ENCODE measurements at regions of chr14 and their contacts with region 1.

Region 1: GRCh38 chr14:67704484-67705089 is 2.9 kb downstream of the RDH12 start:
- DNase-seq: peak; percentile 72
- ATAC-seq: peak; percentile 87
- H3K4me3 ChIP-seq: no peak overlapping the region
- H3K27ac ChIP-seq: no peak overlapping the region
- H3K4me1 ChIP-seq: peaks cover 16 to 32% of the 10 kb centered on the region in 2 experiments
- H3K27me3 ChIP-seq: no peaks in the 10 kb centered on the region
- CTCF ChIP-seq: peak; percentile 71 to 84 (median 83)
- POLR2A ChIP-seq: no peak
- RAD21 ChIP-seq: peak; percentile 90

Region 2: GRCh38 chr14:66624299-66624937 is 1080.2 kb before region 1 on chr14:
- CTCF ChIA-PET with region 1: interaction called, 7 read pairs
- POLR2A ChIA-PET with region 1: no interaction called
- RAD21 ChIA-PET with region 1: no interaction called
- intact Hi-C with region 1: loop called (anchors 5 kb)
- DNase-seq: peak; percentile 48
- ATAC-seq: peak; percentile 98
- H3K4me3 ChIP-seq: no peak overlapping the region
- H3K27ac ChIP-seq: no peak overlapping the region
- H3K4me1 ChIP-seq: no peaks in the 10 kb centered on the region
- H3K27me3 ChIP-seq: no peaks in the 10 kb centered on the region
- CTCF ChIP-seq: peak; percentile 65 to 74 (median 67)
- POLR2A ChIP-seq: no peak
- RAD21 ChIP-seq: peak; percentile 80

Region 3: GRCh38 chr14:67426983-67427606 is 277.5 kb before region 1 on chr14:
- CTCF ChIA-PET with region 1: interaction called, 70 read pairs
- POLR2A ChIA-PET with region 1: interaction called, 3 read pairs
- RAD21 ChIA-PET with region 1: interaction called, 7 to 14 read pairs
- intact Hi-C with region 1: loop called (anchors 2 kb)
- DNase-seq: peak; percentile 71
- ATAC-seq: peak; percentile 91
- H3K4me3 ChIP-seq: no peak overlapping the region
- H3K27ac ChIP-seq: no peak overlapping the region
- H3K4me1 ChIP-seq: peaks cover 5 to 25% of the 10 kb centered on the region in 2 experiments; a peak in 3 of 4 replicates
- H3K27me3 ChIP-seq: no peaks in the 10 kb centered on the region
- CTCF ChIP-seq: peak; percentile 75 to 88 (median 76)
- POLR2A ChIP-seq: no peak
- RAD21 ChIP-seq: peak; percentile 92

Region 4: DNA sequence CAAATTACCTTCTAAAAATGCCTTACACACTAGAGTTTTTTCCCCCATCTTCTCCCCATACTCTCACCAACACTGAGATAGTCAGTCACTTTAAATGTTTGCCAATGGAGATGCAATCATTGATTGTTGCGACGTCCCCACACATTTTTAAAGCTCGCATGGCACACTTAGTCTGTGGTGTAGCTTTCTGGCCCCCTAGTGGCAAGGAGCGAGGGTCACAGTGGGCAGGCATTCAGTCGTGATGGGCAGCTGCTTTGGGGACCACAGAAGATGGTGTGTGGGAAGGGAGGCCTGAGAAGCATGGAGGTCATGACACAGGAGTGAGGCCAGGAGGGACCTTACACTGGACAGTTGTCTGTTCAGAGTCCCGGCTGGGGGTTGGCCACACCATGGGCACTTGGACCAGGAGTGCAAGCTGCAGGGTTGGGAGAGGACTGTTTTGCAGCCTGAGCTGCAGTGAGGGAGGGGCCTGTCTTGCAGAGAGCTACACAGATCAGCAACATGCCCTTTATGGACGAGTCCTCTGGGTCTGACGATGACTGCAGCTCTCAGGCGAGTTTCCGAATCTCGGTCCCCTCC is 133.2 kb before region 1 on chr14:
- CTCF ChIA-PET with region 1: interaction called, 12 read pairs
- POLR2A ChIA-PET with region 1: no interaction called
- RAD21 ChIA-PET with region 1: interaction called, 3 to 4 read pairs
- intact Hi-C with region 1: no loop called
- DNase-seq: peak; percentile 26
- ATAC-seq: peak; percentile 98
- H3K4me3 ChIP-seq: no peak overlapping the region
- H3K27ac ChIP-seq: no peak overlapping the region
- H3K4me1 ChIP-seq: peaks cover 0 to 4% of the 10 kb centered on the region in 2 experiments; a peak in 1 of 4 replicates
- H3K27me3 ChIP-seq: no peaks in the 10 kb centered on the region
- CTCF ChIP-seq: peak; percentile 86 to 96 (median 91)
- POLR2A ChIP-seq: no peak
- RAD21 ChIP-seq: peak; percentile 92

Region 5: DNA sequence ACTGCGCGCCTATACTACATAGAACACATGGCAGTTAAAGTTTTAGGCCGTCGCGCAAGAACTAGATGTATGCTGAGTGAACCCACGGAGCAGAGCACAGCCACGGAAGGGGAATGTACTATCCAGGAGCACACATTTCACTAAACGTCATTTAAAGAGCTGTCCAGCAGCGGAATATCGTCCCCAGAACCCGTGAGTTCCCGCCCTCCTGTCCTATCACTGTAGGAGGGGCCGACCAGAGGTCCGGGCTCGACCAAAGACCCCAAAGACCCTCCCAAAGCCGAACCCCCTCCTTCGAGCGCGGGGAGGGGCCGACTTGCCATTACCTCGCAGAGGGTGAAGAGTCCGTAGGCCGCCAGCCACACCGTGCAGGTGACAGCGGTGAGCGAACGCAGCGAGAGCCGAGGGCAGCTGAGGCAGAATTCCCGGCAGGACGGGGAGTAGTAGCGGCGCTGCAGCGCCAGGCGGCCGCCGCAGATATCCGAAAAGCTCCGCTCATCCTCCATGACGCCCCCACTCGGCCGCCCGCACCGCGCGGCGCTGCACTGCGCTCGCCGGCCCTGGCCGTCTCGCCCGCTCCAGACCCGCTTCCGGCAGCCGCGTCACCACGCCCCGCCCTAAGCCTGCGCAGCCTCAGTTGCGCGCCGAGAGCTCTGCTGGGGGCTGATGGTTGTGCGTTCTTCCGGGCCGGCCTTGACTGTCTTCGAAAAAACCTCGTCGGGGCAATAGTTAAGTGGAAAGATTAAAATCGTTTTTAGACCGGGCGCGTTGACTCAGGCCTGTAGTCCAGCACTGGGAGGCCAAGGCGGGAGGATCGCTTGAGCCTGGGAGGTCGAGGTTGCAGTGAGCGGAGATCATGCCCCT is 104.7 kb before region 1 on chr14 and contains the start of gene PIGH:
- CTCF ChIA-PET with region 1: interaction called, 28 read pairs
- POLR2A ChIA-PET with region 1: interaction called, 4 read pairs
- RAD21 ChIA-PET with region 1: interaction called in 1 of 2 experiments, 6 read pairs
- intact Hi-C with region 1: loop called (anchors 5 kb)
- DNase-seq: peak; percentile 69
- ATAC-seq: peak; percentile 98
- H3K4me3 ChIP-seq: peak within 1 kb of the TSS; percentile 74 to 91
- H3K27ac ChIP-seq: peak within 1 kb of the TSS; percentile 65
- H3K4me1 ChIP-seq: peaks cover 3 to 16% of the 10 kb centered on the region in 2 experiments; a peak in 2 of 4 replicates
- H3K27me3 ChIP-seq: no peaks in the 10 kb centered on the region
- CTCF ChIP-seq: peak; percentile 44 to 60 (median 49); a peak in 5 of 6 replicates
- POLR2A ChIP-seq: peak; percentile 26
- RAD21 ChIP-seq: peak; percentile 13; the same call in 1 of the 2 replicates
- total RNA-seq, gene PIGH: 20.9 TPM

Region 6: DNA sequence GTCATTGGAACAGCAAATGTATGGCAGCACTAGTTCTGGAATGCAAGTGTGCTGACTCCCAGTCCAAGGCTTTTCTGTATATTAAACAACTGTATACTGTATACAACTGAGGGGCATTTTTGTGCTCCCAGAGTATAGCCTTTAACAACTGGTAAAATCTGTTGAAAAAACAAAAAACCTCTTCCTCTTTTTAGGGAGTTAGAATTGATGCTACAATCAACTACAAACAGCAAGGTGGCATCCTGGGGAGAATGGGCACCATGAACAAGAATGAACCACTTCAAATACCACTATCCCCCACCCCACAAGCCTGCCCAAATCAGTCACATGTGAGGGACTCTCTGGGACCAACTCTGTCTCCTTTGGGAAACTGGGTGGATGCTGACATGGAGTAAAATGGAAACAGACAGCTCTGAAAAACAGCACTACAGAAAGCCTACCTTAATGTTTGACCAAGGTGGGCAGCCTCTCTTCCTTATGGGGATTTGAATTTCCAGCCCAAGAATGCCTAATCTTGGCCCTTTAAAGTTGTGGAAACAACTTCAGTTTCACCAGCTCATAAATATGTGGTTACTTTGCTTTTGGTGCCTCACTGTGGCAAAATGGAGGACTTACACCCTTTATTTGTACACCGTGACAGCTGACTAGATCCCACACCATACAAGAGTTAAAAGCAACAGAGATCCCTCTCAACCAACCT is 37.7 kb before region 1 on chr14:
- CTCF ChIA-PET with region 1: interaction called, 27 read pairs
- POLR2A ChIA-PET with region 1: no interaction called
- RAD21 ChIA-PET with region 1: interaction called, 4 to 7 read pairs
- intact Hi-C with region 1: loop called (anchors 5 kb)
- DNase-seq: peak; percentile 45
- ATAC-seq: peak; percentile 90
- H3K4me3 ChIP-seq: no peak overlapping the region
- H3K27ac ChIP-seq: no peak overlapping the region
- H3K4me1 ChIP-seq: no peaks in the 10 kb centered on the region
- H3K27me3 ChIP-seq: no peaks in the 10 kb centered on the region
- CTCF ChIP-seq: peak; percentile 51 to 86 (median 76)
- POLR2A ChIP-seq: no peak
- RAD21 ChIP-seq: peak; percentile 92

Region 7: GRCh38 chr14:68011406-68012028 is 306.9 kb after region 1 on chr14:
- CTCF ChIA-PET with region 1: no interaction called
- POLR2A ChIA-PET with region 1: no interaction called
- RAD21 ChIA-PET with region 1: no interaction called
- intact Hi-C with region 1: no loop called
- DNase-seq: no peak
- ATAC-seq: no peak
- H3K4me3 ChIP-seq: no peak overlapping the region
- H3K27ac ChIP-seq: peak overlapping the region; percentile 34; the same call in 1 of the 2 replicates
- H3K4me1 ChIP-seq: peaks cover 0 to 27% of the 10 kb centered on the region in 2 experiments; a peak in 2 of 4 replicates
- H3K27me3 ChIP-seq: no peaks in the 10 kb centered on the region
- CTCF ChIP-seq: no peak
- POLR2A ChIP-seq: no peak
- RAD21 ChIP-seq: no peak